Activated CD4-positive, alpha-beta T cell treated with anti-CD3 and anti-CD28 coated beads for 36 hours (primary cell): ENCODE measurements at regions of chr10 and their contacts with region 1.

Region 1: DNA sequence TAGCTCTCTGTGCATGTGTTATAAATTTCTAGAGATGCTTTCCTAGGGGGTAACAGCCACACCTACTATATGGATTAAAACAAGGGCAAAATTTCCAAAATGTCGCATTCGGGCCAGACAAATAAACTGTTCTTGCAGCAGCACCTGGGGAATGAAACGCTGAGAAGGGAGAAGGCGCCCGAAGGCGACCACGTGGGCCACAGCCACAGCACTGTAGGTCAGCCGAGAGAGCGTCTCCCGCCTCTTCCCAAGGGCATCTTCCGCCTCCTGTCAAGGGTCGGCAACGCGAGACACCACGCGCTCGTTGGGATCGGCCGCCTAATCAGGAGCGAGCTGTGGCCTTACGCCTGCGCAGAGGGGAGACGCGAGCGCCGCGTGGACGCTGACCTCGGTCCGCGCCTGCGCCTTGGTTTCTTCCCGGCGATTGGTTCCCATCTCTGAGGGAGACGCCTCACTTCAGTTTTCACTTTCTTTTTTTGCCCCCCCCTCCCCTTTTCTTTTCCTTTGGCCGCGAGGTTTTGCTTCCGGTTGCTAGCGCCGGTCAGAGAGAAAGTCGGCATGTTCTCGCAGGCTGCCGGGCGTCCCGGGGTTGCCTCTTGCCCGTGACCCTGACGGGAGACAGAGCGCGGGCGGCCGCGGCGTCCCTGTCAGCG is at the start of gene TASOR2:
- DNase-seq: peak; percentile 98
- ATAC-seq: peak; percentile 91
- H3K4me3 Mint-ChIP-seq: peak within 1 kb of the TSS; percentile 96
- H3K27ac Mint-ChIP-seq: peak within 1 kb of the TSS; percentile 92
- H3K4me1 Mint-ChIP-seq: peaks cover 56% of the 10 kb centered on the region
- H3K27me3 Mint-ChIP-seq: no peaks in the 10 kb centered on the region
- total RNA-seq, gene TASOR2: 41.9 to 45.4 TPM

Region 2: GRCh38 chr10:4825851-4826665 is 858.4 kb before region 1 on chr10 and contains the start of gene AKR1E2:
- CTCF ChIA-PET with region 1: no interaction called
- POLR2A ChIA-PET with region 1: no interaction called
- intact Hi-C with region 1: loop called in 1 of 2 experiments (anchors 2 kb)
- DNase-seq: peak; percentile 93
- ATAC-seq: peak; percentile 94
- H3K4me3 Mint-ChIP-seq: peak within 1 kb of the TSS; percentile 77
- H3K27ac Mint-ChIP-seq: peak within 1 kb of the TSS; percentile 83
- H3K4me1 Mint-ChIP-seq: peaks cover 27% of the 10 kb centered on the region
- H3K27me3 Mint-ChIP-seq: peaks cover 9% of the 10 kb centered on the region
- total RNA-seq, gene AKR1E2: 9.8 to 13.4 TPM

Region 3: GRCh38 chr10:5559642-5560141 is 124.8 kb before region 1 on chr10:
- CTCF ChIA-PET with region 1: no interaction called
- POLR2A ChIA-PET with region 1: no interaction called
- intact Hi-C with region 1: no loop called
- DNase-seq: no peak
- ATAC-seq: no peak
- H3K4me3 Mint-ChIP-seq: no peak overlapping the region
- H3K27ac Mint-ChIP-seq: no peak overlapping the region
- H3K4me1 Mint-ChIP-seq: peaks cover 25% of the 10 kb centered on the region
- H3K27me3 Mint-ChIP-seq: no peaks in the 10 kb centered on the region

Region 4: DNA sequence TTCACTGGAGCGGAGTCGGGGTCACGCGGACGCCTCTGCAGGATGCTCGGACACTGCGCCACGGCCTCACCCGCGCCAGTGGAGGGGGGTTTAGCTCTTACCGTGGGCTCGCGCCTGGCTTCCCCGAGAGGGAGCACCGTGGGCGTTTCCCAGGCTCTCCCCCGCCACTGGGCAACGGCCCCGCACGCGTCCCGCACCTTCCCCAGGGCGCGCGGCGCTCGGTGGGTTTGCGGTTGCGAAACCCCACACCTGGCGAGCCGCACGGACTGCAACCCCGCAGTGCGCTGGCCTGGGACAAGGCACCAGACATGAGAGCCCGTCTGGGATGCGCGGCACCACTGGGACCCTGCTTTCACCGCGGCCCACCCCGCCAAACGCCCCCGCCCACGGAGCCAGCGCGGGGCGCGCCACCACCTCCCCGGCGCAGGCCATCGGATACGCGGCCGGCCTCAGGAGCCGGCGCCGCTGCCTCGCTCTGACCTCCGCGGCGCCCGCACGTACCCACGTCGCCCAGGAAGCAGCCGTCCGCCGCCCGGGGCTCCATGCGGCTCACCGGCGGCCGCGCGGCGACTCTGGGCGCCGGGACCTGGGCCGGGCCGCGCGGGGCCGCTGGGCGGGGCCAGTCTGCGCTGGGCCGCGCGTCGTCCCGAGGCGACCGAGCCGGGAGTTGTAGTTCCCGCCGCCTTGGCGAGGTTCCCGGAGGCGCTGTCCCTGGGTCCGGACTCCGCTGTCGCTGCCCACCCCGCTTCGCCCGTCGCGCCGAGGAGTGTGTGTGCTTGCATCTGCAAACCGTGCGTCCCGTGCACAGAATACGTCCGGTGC is 18.2 kb before region 1 on chr10 and contains the start of gene ASB13:
- CTCF ChIA-PET with region 1: interaction called, 4 read pairs
- POLR2A ChIA-PET with region 1: no interaction called
- intact Hi-C with region 1: loop called (anchors 1 to 2 kb)
- DNase-seq: peak; percentile 61
- ATAC-seq: peak; percentile 88
- H3K4me3 Mint-ChIP-seq: peak within 1 kb of the TSS; percentile 82
- H3K27ac Mint-ChIP-seq: peak within 1 kb of the TSS; percentile 71
- H3K4me1 Mint-ChIP-seq: peaks cover 11% of the 10 kb centered on the region
- H3K27me3 Mint-ChIP-seq: no peaks in the 10 kb centered on the region
- total RNA-seq, gene ASB13: 6.4 to 9.8 TPM

Region 5: DNA sequence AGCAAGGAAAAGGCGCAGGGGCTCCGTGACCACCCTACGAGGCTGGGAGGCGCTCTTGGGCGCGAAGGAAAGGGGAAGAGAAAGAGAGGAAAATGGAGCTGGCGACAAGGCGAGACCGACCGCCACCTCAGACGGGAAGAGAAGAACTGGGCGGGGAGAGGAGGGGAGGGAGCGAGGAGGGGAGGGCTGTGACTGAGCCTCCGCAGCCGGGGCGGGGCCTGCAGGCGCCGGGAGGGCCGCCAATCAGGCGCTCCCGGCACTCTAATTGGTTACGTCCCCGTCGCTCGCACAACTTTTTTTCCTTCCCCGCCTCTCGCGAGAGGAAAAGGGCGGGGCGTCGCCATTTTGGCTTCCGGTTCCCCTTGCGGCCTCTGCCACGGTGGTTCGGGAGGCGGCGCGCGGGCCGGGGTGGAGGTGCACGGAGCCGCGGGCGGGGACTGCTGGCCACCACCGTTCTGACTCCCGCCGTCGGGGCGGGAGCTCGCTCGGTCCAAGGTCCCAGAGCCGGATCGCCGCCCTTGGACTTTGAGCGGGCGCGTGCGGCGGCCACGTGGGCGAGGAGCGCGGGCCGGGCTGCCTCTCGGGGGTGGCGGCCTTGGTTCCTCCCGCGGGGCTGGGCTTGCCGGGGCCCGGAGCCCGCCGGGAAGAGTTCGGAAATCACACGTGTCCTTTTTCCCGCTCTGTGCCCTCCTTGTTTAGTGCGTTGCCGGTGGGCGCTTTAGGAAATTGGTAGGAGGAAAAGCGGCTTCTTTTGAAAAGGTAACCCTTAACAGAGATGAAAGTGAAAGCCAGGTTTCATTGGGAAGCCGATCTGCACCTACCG is 129.1 kb after region 1 on chr10 and contains the start of gene GDI2:
- CTCF ChIA-PET with region 1: interaction called, 3 read pairs
- POLR2A ChIA-PET with region 1: interaction called, 3 read pairs
- intact Hi-C with region 1: loop called (anchors 1 to 2 kb)
- DNase-seq: peak; percentile 98
- ATAC-seq: peak; percentile 94
- H3K4me3 Mint-ChIP-seq: peak within 1 kb of the TSS; percentile 92
- H3K27ac Mint-ChIP-seq: peak within 1 kb of the TSS; percentile 98
- H3K4me1 Mint-ChIP-seq: peaks cover 60% of the 10 kb centered on the region
- H3K27me3 Mint-ChIP-seq: no peaks in the 10 kb centered on the region
- total RNA-seq, gene GDI2: 276 to 290 TPM

Region 6: DNA sequence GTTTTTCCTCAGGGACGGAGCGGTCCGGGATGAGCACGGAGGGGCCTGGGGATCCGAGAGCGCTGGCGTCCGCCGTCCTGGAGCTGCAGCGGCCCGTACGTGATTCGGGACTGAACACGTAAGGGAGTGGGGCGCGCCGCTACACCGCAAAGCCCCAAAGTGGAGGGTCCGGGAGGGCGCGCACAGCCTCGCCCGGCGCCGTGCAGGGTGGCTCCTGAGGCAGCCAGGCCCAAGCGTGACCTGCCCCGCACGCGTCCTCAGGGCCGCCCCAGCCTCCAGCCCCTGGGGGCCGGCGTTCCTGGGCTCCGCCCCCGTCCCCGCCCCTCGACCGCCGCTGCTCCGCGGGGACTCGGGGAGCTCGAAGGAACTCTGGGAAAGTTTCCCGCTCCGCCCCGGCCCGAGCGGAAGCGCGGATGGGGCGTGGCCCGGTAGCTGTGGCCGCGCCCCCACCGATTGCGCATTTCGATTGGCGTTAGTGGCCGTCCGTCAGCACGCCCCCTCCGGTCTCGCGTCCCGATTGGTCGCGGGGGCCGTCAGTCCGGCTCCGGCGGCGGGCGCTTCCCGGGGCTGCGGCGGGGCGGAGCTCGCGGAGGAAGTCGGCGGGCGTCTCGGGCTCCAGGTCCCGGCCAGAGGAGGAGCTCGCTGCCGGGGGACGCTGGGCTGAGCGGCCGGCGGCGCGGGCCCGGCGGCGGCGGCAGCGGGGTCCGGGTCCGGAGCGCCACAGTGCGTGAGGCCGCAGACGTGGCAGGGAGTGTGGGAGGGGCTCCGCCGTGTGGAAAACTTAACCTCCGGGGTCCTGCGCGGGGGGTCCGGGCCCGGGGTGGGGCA is 205.4 kb after region 1 on chr10 and contains the starts of genes ANKRD16 and FBH1:
- CTCF ChIA-PET with region 1: no interaction called
- POLR2A ChIA-PET with region 1: interaction called, 5 read pairs
- intact Hi-C with region 1: loop called (anchors 1 to 5 kb)
- DNase-seq: peak; percentile 99
- ATAC-seq: peak; percentile 87
- H3K4me3 Mint-ChIP-seq: peak within 1 kb of the TSS; percentile 90
- H3K27ac Mint-ChIP-seq: peak within 1 kb of the TSS; percentile 84
- H3K4me1 Mint-ChIP-seq: peaks cover 53% of the 10 kb centered on the region
- H3K27me3 Mint-ChIP-seq: no peaks in the 10 kb centered on the region
- total RNA-seq, gene ANKRD16: 7.5 to 8.3 TPM
- total RNA-seq, gene FBH1: 53.3 to 56.2 TPM

Region 7: DNA sequence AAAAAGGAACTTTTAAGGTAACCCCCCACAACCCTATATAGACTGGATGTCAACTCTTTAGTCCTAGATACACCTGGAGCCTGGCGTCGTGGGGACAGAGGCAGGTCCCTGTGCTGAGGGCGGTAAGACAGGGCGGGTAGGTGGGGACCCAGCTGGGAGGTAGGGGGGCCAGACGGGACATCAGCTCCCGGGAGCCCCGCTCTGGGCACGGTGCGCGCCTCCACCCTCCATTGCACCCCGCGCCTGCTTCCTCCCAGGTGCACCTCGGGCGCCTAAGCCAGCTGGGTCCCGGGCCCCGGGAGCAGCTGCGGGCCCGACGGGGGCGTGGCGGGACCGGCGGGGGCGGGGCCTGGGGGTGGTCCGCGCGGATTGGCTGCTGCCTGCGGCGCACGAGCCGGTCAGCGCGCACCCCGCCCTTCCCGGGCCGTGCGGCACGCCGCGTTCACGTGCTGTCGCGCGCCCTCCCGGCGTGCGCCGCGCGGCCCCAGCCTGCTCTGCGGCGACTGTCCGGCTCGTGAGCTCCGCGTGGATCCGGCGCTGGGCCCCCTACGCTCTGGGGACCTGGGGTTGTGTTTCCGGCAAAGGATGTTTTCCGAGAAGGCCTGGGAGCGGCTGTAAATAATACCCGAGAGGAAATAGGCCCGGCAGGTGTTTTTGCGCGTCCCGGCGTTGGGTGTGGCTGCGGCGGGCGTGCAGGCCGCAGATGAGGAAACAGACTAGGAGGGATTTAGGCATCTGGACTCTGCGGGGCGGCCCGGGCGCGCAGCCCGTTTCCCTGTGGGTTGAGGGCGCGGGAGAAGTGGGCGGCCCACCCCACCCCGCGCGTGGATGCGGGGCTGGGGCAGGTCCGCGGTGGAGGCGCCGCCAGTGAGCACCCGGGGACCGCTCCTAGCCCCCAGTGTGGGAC is 479.2 kb after region 1 on chr10:
- CTCF ChIA-PET with region 1: no interaction called
- POLR2A ChIA-PET with region 1: no interaction called
- intact Hi-C with region 1: loop called in 1 of 2 experiments (anchors 10 kb)
- DNase-seq: peak; percentile 94
- ATAC-seq: peak; percentile 92
- H3K4me3 Mint-ChIP-seq: peak overlapping the region; percentile 92
- H3K27ac Mint-ChIP-seq: peak overlapping the region; percentile 95
- H3K4me1 Mint-ChIP-seq: peaks cover 67% of the 10 kb centered on the region
- H3K27me3 Mint-ChIP-seq: no peaks in the 10 kb centered on the region

Region 8: GRCh38 chr10:6795571-6795970 is 1111.1 kb after region 1 on chr10:
- CTCF ChIA-PET with region 1: no interaction called
- POLR2A ChIA-PET with region 1: no interaction called
- intact Hi-C with region 1: no loop called
- DNase-seq: no peak
- ATAC-seq: no peak
- H3K4me3 Mint-ChIP-seq: no peak overlapping the region
- H3K27ac Mint-ChIP-seq: no peak overlapping the region
- H3K4me1 Mint-ChIP-seq: no peaks in the 10 kb centered on the region
- H3K27me3 Mint-ChIP-seq: no peaks in the 10 kb centered on the region